HCT116 (cell line): ENCODE measurements at regions of chr12 and their contacts with region 1.

Region 1: GRCh38 chr12:92987362-92987761 is 58.3 kb upstream of the EEA1 start:
- DNase-seq: peak; percentile 42
- ATAC-seq: peak; percentile 78
- H3K4me3 ChIP-seq: no peak overlapping the region
- H3K27ac ChIP-seq: no peak overlapping the region
- H3K4me1 ChIP-seq: 0 out of 4 replicates have a peak, but pooled peaks cover 0 to 4% of the 10 kb centered on the region in 2 experiments
- H3K27me3 ChIP-seq: no peaks in the 10 kb centered on the region
- CTCF ChIP-seq: peak; percentile 39 to 81 (median 65); a peak in 5 of 6 replicates
- POLR2A ChIP-seq: no peak
- RAD21 ChIP-seq: peak; percentile 86

Region 2: GRCh38 chr12:92784795-92785562 is 202.4 kb before region 1 on chr12:
- CTCF ChIA-PET with region 1: interaction called, 9 read pairs
- POLR2A ChIA-PET with region 1: no interaction called
- RAD21 ChIA-PET with region 1: no interaction called
- intact Hi-C with region 1: loop called (anchors 1 kb)
- DNase-seq: peak; percentile 72
- ATAC-seq: peak; percentile 100
- H3K4me3 ChIP-seq: no peak overlapping the region
- H3K27ac ChIP-seq: no peak overlapping the region
- H3K4me1 ChIP-seq: no peaks in the 10 kb centered on the region
- H3K27me3 ChIP-seq: no peaks in the 10 kb centered on the region
- CTCF ChIP-seq: peak; percentile 49 to 76 (median 62); a peak in 5 of 6 replicates
- POLR2A ChIP-seq: no peak
- RAD21 ChIP-seq: peak; percentile 92

Region 3: GRCh38 chr12:92827836-92828431 is 159.4 kb before region 1 on chr12:
- CTCF ChIA-PET with region 1: no interaction called
- POLR2A ChIA-PET with region 1: no interaction called
- RAD21 ChIA-PET with region 1: no interaction called
- intact Hi-C with region 1: loop called (anchors 10 kb)
- DNase-seq: peak; percentile 28
- ATAC-seq: peak; percentile 70
- H3K4me3 ChIP-seq: no peak overlapping the region
- H3K27ac ChIP-seq: no peak overlapping the region
- H3K4me1 ChIP-seq: no peaks in the 10 kb centered on the region
- H3K27me3 ChIP-seq: no peaks in the 10 kb centered on the region
- CTCF ChIP-seq: peak; percentile 77 to 91 (median 87); a peak in 5 of 6 replicates
- POLR2A ChIP-seq: no peak
- RAD21 ChIP-seq: peak; percentile 72

Region 4: DNA sequence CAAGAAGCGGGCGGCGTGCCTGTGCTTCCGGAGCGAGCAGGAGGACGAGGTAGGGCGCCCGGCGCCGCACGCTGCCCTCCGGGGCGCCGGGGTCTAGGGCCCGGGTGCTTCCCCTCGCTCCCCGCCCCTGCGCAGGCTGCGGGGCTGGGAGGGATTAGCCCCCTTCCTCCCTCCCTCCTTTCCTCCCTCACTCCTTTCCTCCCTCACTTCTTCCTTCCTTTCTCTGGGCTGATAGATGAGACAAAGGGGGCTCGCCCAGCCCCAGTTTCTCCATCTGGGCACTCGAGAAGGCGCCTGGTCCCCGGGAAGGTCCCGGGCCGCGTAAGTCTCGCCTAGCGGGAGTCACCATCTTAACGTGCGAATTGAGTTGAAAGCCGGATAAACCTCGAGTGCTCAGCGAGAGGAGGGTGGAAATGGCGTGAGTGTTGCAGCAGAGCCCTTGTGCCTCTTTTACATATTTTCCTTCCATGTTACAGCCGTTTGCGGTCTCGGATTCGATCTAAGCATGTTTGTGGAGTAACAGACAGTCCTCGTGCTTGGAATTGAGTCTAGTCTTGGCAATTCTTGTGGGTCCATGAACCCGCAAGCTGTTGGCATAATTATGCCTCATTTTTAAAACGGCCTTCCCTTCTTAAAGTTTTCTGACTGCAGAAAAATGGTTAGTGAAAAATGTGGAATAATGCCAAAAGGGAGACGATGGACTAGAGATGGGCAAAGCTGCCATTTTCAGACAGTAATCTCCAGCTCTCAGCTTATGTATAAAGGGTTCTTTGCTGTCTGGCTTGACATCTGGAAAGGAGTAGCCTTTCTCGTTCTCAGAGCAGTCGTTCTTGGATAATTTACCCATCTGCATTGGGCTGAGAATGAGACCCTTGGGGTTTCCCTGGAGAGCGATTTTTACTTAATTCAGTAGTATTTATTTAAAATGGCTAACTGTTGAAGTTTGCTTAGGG is 391.3 kb after region 1 on chr12:
- CTCF ChIA-PET with region 1: interaction called, 12 read pairs
- POLR2A ChIA-PET with region 1: no interaction called
- RAD21 ChIA-PET with region 1: interaction called, 3 to 6 read pairs
- intact Hi-C with region 1: loop called (anchors 5 kb)
- DNase-seq: no peak
- ATAC-seq: peak; percentile 26
- H3K4me3 ChIP-seq: peak overlapping the region; percentile 86 to 88
- H3K27ac ChIP-seq: peak overlapping the region; percentile 68
- H3K4me1 ChIP-seq: peaks cover 17 to 32% of the 10 kb centered on the region in 2 experiments
- H3K27me3 ChIP-seq: no peaks in the 10 kb centered on the region
- CTCF ChIP-seq: no peak
- POLR2A ChIP-seq: no peak
- RAD21 ChIP-seq: no peak

Region 5: GRCh38 chr12:93397412-93397811 is 410.1 kb after region 1 on chr12:
- CTCF ChIA-PET with region 1: interaction called, 41 read pairs
- POLR2A ChIA-PET with region 1: no interaction called
- RAD21 ChIA-PET with region 1: interaction called in 1 of 2 experiments, 5 read pairs
- intact Hi-C with region 1: loop called (anchors 2 kb)
- DNase-seq: no peak
- ATAC-seq: no peak
- H3K4me3 ChIP-seq: no peak overlapping the region
- H3K27ac ChIP-seq: no peak overlapping the region
- H3K4me1 ChIP-seq: no peaks in the 10 kb centered on the region
- H3K27me3 ChIP-seq: no peaks in the 10 kb centered on the region
- CTCF ChIP-seq: no peak
- POLR2A ChIP-seq: no peak
- RAD21 ChIP-seq: no peak

Region 6: DNA sequence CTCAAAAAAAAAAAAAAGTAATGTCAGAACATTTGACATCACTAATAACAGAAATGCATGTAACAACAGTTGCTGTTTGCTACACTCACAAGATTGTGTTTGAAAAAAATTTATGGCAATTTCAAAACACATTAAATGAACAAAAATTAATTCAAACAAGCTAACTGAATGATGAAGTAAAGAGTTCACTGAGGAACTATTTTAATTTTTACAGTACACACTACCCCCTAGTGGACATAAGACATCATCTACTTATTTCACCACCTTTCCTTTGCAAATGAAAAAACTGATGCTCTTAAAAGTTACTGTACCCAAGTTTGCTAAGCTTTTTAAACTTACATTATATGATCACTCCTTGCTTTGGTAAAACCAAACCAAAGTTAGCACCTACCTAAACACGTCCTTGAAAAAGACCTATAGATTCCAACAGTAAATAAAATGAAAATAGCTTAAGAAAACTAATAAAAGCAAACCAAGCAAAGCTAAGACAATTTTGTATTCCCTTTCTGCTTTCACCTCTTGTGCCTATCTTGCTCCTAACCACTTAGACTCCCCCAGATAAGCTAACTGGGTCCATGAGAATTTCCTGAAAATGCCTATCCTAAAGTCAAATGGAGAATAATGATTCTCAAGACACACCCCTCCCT is 432.1 kb after region 1 on chr12:
- CTCF ChIA-PET with region 1: interaction called, 31 read pairs
- POLR2A ChIA-PET with region 1: no interaction called
- RAD21 ChIA-PET with region 1: interaction called, 3 to 5 read pairs
- intact Hi-C with region 1: no loop called
- DNase-seq: no peak
- ATAC-seq: peak; percentile 57
- H3K4me3 ChIP-seq: no peak overlapping the region
- H3K27ac ChIP-seq: no peak overlapping the region
- H3K4me1 ChIP-seq: no peaks in the 10 kb centered on the region
- H3K27me3 ChIP-seq: no peaks in the 10 kb centered on the region
- CTCF ChIP-seq: peak; percentile 32 to 73 (median 48); a peak in 5 of 6 replicates
- POLR2A ChIP-seq: no peak
- RAD21 ChIP-seq: peak; percentile 46

Region 7: DNA sequence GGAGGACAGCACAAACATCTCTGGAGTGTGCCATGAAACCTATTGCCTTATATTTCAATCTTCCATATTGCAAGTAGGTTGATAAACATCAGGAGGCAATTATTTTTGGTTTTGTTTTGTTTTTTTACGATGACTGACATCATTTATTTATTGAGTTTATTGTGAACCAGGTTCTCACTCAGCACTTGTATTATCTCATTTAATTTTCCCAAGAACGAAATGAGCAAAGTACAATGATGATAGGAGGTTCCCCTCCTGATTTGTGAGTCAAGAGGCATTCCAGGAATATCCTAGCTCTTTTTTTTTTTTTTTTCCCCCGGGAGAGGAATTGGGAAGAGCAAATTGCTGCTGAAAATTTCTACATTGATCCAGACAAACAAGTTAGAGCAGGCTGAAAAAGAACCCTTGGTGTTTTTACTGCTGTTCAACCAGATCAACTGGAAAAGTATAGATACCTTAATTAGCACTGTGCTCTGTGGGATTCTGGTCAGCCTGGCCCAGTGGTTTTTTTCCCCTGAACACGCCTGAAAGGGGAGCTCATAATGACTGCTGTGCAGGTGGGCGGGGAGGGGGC is 589.9 kb after region 1 on chr12:
- CTCF ChIA-PET with region 1: no interaction called
- POLR2A ChIA-PET with region 1: no interaction called
- RAD21 ChIA-PET with region 1: no interaction called
- intact Hi-C with region 1: no loop called
- DNase-seq: no peak
- ATAC-seq: no peak
- H3K4me3 ChIP-seq: no peak overlapping the region
- H3K27ac ChIP-seq: no peak overlapping the region
- H3K4me1 ChIP-seq: peaks cover 0 to 8% of the 10 kb centered on the region in 2 experiments; a peak in 3 of 4 replicates
- H3K27me3 ChIP-seq: no peaks in the 10 kb centered on the region
- CTCF ChIP-seq: no peak
- POLR2A ChIP-seq: no peak
- RAD21 ChIP-seq: no peak

Region 8: DNA sequence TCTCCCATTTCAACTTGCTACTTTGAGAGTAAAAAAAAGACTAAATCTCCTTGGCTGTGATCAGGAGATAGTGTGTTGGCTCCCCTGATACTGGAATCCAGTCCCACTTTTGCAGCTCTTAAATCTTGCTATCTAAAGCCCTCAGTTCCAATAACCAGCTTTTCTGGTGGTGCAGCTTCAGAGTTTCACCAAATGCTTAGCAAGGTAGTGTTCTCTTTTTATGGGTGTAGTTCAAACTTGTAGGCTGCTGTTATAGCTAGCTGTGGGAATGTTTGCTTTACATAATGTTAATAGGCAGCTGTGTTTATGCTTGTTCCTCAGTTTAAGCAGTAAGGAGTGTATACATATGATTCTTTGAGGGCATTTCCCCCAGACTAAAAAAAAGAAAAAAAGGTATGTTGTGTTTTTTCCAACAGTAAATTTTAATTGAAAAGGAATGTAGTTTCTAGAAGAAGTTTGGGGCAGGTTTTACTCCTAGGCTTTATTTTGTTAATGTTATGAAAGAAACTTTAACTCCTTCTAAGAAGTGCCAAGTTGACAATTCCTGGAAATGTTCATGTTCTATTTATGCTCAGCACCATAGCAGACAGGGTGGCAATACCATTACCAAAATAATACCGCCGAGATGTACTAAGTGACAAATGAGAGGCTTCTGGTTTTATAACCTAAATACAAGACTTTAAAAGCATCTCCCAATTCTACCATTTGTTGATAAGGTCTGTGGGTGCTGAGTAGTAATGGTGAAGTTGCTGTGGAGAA is 701.9 kb after region 1 on chr12:
- CTCF ChIA-PET with region 1: no interaction called
- POLR2A ChIA-PET with region 1: no interaction called
- RAD21 ChIA-PET with region 1: no interaction called
- intact Hi-C with region 1: no loop called
- DNase-seq: no peak
- ATAC-seq: no peak
- H3K4me3 ChIP-seq: no peak overlapping the region
- H3K27ac ChIP-seq: no peak overlapping the region
- H3K4me1 ChIP-seq: no peaks in the 10 kb centered on the region
- H3K27me3 ChIP-seq: no peaks in the 10 kb centered on the region
- CTCF ChIP-seq: no peak
- POLR2A ChIP-seq: no peak
- RAD21 ChIP-seq: no peak